T-cell (primary cell): ENCODE measurements at regions of chr14 and their contacts with region 1.

Region 1: GRCh38 chr14:81406863-81407262 is 6.7 kb upstream of the STON2 start:
- DNase-seq: no peak
- ATAC-seq: no peak
- H3K4me3 ChIP-seq: no peak overlapping the region
- H3K4me3 Mint-ChIP-seq: no peak overlapping the region
- H3K27ac ChIP-seq: no peak overlapping the region
- H3K27ac Mint-ChIP-seq: no peak overlapping the region
- H3K4me1 ChIP-seq: no peaks in the 10 kb centered on the region
- H3K4me1 Mint-ChIP-seq: no peaks in the 10 kb centered on the region
- H3K27me3 ChIP-seq: peaks cover 0 to 8% of the 10 kb centered on the region in 2 experiments
- H3K27me3 Mint-ChIP-seq: peaks cover 5 to 17% of the 10 kb centered on the region in 2 donors

Region 2: GRCh38 chr14:81018251-81018650 is 388.6 kb before region 1 on chr14:
- CTCF ChIA-PET with region 1: no interaction called
- POLR2A ChIA-PET with region 1: interaction called in 1 of 2 experiments, 10 read pairs
- DNase-seq: no peak
- ATAC-seq: no peak
- H3K4me3 ChIP-seq: no peak overlapping the region
- H3K4me3 Mint-ChIP-seq: no peak overlapping the region
- H3K27ac ChIP-seq: no peak overlapping the region
- H3K27ac Mint-ChIP-seq: no peak overlapping the region
- H3K4me1 ChIP-seq: no peaks in the 10 kb centered on the region
- H3K4me1 Mint-ChIP-seq: no peaks in the 10 kb centered on the region
- H3K27me3 ChIP-seq: no peaks in the 10 kb centered on the region
- H3K27me3 Mint-ChIP-seq: peaks cover 10 to 24% of the 10 kb centered on the region in 2 donors

Region 3: DNA sequence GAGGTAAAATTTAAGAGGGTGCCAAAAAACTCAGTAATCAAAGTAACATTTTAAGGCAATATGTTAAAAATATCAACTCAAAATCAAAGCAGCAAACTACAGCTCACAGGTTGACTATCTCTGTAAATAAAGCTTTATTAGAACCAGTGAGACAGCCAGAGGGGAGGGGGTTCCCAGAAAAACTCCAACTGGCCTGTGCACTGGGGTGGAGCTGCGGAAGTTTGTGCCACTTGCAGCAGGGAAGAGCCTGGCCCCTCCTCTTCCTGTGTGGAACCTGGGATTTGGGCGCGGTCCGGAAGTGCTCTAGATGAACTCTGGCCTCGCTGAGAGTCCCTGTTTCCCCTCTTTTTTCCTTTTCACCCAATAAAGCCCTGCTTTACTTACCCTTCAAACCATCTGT is 14.8 kb before region 1 on chr14:
- CTCF ChIA-PET with region 1: no interaction called
- POLR2A ChIA-PET with region 1: interaction called in 1 of 2 experiments, 11 read pairs
- DNase-seq: no peak
- ATAC-seq: no peak
- H3K4me3 ChIP-seq: no peak overlapping the region
- H3K4me3 Mint-ChIP-seq: no peak overlapping the region
- H3K27ac ChIP-seq: no peak overlapping the region
- H3K27ac Mint-ChIP-seq: no peak overlapping the region
- H3K4me1 ChIP-seq: no peaks in the 10 kb centered on the region
- H3K4me1 Mint-ChIP-seq: no peaks in the 10 kb centered on the region
- H3K27me3 ChIP-seq: no peaks in the 10 kb centered on the region
- H3K27me3 Mint-ChIP-seq: peaks cover 6 to 7% of the 10 kb centered on the region in 2 donors

Region 4: DNA sequence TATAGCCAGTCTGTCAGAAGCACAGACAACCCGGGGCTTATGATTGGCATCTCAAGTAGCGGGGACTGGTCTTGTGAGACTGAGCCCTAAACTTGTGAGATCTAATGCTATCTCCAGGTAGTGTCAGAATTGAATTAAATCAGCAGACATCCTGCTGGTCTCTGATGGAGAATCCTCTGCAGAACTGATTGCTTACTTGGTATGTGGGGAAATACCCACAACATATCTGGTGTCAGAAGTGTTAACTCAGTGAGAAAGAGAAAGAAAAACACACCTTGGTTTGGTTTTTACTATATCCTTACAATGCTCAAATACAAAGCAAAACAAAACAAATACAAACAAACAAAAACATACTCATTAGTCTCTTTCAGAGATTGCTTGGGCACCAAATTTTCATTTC is 116.8 kb after region 1 on chr14:
- CTCF ChIA-PET with region 1: no interaction called
- POLR2A ChIA-PET with region 1: no interaction called
- DNase-seq: no peak
- ATAC-seq: no peak
- H3K4me3 ChIP-seq: no peak overlapping the region
- H3K4me3 Mint-ChIP-seq: no peak overlapping the region
- H3K27ac ChIP-seq: no peak overlapping the region
- H3K27ac Mint-ChIP-seq: no peak overlapping the region
- H3K4me1 ChIP-seq: peaks cover 10 to 16% of the 10 kb centered on the region in 2 experiments
- H3K4me1 Mint-ChIP-seq: peaks cover 63 to 70% (median 68%) of the 10 kb centered on the region in 3 donors
- H3K27me3 ChIP-seq: no peaks in the 10 kb centered on the region
- H3K27me3 Mint-ChIP-seq: no peaks in the 10 kb centered on the region